ENCODE measurements at regions of chr7 and their contacts with region 1.

Region 1: DNA sequence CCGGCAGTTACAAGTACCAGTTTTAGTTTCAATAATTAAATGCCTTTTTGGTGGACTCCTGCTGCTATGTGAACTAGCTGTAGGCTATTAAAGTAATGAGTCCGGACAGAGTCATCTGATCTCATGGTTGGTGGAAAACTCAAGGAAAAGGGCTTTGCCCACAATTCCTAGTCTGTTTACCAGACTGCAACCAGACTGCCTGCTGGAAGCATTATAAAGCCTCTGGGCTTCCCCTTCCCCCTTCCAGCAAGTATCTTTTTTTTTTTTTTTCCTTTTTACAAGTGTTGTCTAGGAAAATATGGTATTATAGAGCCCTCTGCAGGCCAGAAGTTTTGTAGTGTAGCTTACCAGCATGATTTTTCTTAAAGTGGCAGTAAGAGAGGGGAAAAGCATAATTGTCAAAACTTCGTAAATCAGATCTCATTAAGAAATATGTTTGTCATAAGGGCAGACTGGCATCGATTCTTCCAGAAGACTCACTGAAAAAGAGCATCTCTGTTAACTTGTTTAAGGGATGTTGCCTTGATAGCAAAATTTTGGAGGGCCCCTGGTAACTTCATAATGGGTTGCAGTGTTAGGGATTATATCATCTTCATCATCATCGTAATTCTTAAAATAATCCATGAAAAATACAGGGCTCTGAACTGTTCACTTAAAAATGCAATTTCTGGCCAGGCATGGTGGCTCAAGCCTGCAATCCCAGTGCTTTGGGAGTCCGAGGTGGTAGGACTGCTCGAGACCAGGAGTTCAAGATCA is 181.3 kb downstream of the TAX1BP1 start:
- DNase-seq: peak; percentile 48
- ATAC-seq: peak; percentile 76
- H3K4me3 ChIP-seq: no peak overlapping the region
- H3K27ac ChIP-seq: no peak overlapping the region
- H3K4me1 ChIP-seq: peaks cover 7% of the 10 kb centered on the region
- H3K27me3 ChIP-seq: no peaks in the 10 kb centered on the region
- CTCF ChIP-seq: peak; percentile 43 to 71 (median 53); a peak in 5 of 6 replicates
- EP300 ChIP-seq: no peak
- POLR2A ChIP-seq: no peak
- RAD21 ChIP-seq: peak; percentile 84

Region 2: DNA sequence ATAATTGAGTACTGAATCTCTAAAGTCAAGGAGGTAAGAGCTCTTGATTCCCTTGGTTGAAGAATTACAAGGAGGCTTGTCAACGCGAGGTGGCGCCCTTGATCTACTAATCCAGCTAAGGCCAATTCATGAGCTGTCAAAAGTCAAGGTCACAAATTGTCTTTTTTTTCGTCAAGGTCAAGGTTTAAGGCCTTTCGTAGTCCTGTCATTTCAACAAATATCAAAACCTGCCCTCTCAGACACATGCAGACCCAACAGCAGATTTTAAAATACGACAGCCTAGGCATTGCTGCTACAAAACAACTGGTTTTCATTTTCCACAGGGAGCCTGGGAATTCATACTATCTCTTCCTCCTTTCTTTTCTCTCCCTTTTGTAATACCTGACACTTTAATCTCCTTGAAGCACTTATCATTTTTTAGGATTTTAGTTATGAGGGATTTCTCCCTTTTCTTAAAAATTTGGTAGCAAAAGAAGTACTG is 724.9 kb before region 1 on chr7:
- CTCF ChIA-PET with region 1: interaction called, 93 read pairs
- POLR2A ChIA-PET with region 1: no interaction called
- RAD21 ChIA-PET with region 1: interaction called, 70 read pairs
- SMC1A ChIA-PET with region 1: interaction called, 47 read pairs
- in situ Hi-C with region 1: loop called (anchors 5 kb)
- intact Hi-C with region 1: loop called (anchors 1 kb)
- DNase-seq: peak; percentile 16
- ATAC-seq: peak; percentile 68
- H3K4me3 ChIP-seq: no peak overlapping the region
- H3K27ac ChIP-seq: no peak overlapping the region
- H3K4me1 ChIP-seq: no peaks in the 10 kb centered on the region; the same call in 1 of the 2 replicates
- H3K27me3 ChIP-seq: peaks cover 22 to 40% of the 10 kb centered on the region in 2 experiments
- CTCF ChIP-seq: peak; percentile 70 to 89 (median 74)
- EP300 ChIP-seq: no peak
- POLR2A ChIP-seq: no peak
- RAD21 ChIP-seq: peak; percentile 94

Region 3: DNA sequence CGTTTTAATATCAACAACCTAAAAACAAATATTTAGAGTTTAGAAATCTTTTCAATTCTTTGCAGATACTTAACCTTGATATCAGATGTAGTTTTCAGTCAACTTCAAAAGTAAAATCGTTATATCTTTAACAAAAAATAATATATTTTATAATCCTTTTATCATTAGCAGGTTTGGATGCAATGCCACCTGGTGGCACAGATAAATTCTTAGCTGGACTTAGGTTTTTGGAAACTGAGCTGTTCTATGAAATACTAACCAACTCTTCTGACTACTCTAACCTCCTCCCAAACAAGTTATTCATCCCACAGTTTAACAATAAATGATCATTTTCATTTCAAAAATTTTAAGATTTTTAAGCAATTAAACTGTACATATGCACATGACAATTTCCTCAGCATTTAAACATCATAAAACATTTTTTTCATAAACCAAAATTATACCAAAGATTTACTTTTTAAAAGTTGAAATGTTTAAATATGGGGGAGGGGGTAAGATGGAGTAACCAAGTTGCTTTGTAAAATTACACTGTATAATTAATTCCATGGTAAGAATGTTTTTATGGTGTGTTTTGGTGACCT is 315.5 kb before region 1 on chr7:
- CTCF ChIA-PET with region 1: interaction called, 14 read pairs
- POLR2A ChIA-PET with region 1: no interaction called
- RAD21 ChIA-PET with region 1: no interaction called
- SMC1A ChIA-PET with region 1: interaction called, 3 read pairs
- in situ Hi-C with region 1: no loop called
- intact Hi-C with region 1: no loop called
- DNase-seq: no peak
- ATAC-seq: no peak
- H3K4me3 ChIP-seq: no peak overlapping the region
- H3K27ac ChIP-seq: no peak overlapping the region
- H3K4me1 ChIP-seq: no peaks in the 10 kb centered on the region
- H3K27me3 ChIP-seq: no peaks in the 10 kb centered on the region
- CTCF ChIP-seq: peak in 2 of 3 experiments; percentile 33 to 44; a peak in 4 of 6 replicates
- EP300 ChIP-seq: no peak
- POLR2A ChIP-seq: no peak
- RAD21 ChIP-seq: peak; percentile 30

Region 4: DNA sequence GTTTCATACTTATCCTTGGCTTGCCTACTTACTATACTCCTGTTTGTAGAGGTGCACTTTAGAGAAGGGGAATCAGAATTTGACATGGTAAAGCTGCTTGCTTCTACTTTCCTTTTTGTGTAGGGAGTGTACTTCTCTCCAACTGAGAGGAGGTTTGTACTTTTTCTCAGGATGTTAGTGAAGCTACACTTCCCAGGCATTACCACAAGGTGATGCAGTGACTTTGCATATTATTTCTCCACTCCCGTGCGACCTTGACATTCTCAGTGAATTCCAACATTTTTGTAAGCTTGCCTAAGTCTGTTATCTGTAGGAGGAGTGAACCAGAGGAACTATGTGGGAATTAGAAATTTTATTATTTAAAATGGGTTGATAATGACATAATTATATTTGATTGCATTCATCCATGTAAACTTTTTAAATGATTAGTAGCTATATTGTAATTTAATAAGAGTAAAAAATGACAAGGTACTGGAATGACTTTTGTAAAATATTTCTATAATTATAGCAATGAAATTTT is 176.1 kb before region 1 on chr7:
- CTCF ChIA-PET with region 1: interaction called, 17 read pairs
- POLR2A ChIA-PET with region 1: no interaction called
- RAD21 ChIA-PET with region 1: interaction called, 4 read pairs
- SMC1A ChIA-PET with region 1: interaction called, 26 read pairs
- in situ Hi-C with region 1: no loop called
- intact Hi-C with region 1: no loop called
- DNase-seq: no peak
- ATAC-seq: peak; percentile 21; the same call in 2 of the 3 replicates
- H3K4me3 ChIP-seq: no peak overlapping the region
- H3K27ac ChIP-seq: no peak overlapping the region
- H3K4me1 ChIP-seq: no peaks in the 10 kb centered on the region
- H3K27me3 ChIP-seq: no peaks in the 10 kb centered on the region
- CTCF ChIP-seq: peak; percentile 46 to 64 (median 55); a peak in 5 of 6 replicates
- EP300 ChIP-seq: no peak
- POLR2A ChIP-seq: no peak
- RAD21 ChIP-seq: peak; percentile 58

Region 5: GRCh38 chr7:27784393-27785053 is 136.7 kb before region 1 on chr7:
- CTCF ChIA-PET with region 1: interaction called, 18 read pairs
- POLR2A ChIA-PET with region 1: no interaction called
- RAD21 ChIA-PET with region 1: interaction called, 5 read pairs
- SMC1A ChIA-PET with region 1: interaction called, 8 read pairs
- in situ Hi-C with region 1: no loop called
- intact Hi-C with region 1: loop called (anchors 5 kb)
- DNase-seq: no peak
- ATAC-seq: peak; percentile 60
- H3K4me3 ChIP-seq: no peak overlapping the region
- H3K27ac ChIP-seq: no peak overlapping the region
- H3K4me1 ChIP-seq: no peaks in the 10 kb centered on the region
- H3K27me3 ChIP-seq: no peaks in the 10 kb centered on the region
- CTCF ChIP-seq: peak; percentile 33 to 45 (median 39); a peak in 5 of 6 replicates
- EP300 ChIP-seq: no peak
- POLR2A ChIP-seq: no peak
- RAD21 ChIP-seq: 0 out of 2 replicates have a peak, but pooled peaks have one; percentile 15

Region 6: DNA sequence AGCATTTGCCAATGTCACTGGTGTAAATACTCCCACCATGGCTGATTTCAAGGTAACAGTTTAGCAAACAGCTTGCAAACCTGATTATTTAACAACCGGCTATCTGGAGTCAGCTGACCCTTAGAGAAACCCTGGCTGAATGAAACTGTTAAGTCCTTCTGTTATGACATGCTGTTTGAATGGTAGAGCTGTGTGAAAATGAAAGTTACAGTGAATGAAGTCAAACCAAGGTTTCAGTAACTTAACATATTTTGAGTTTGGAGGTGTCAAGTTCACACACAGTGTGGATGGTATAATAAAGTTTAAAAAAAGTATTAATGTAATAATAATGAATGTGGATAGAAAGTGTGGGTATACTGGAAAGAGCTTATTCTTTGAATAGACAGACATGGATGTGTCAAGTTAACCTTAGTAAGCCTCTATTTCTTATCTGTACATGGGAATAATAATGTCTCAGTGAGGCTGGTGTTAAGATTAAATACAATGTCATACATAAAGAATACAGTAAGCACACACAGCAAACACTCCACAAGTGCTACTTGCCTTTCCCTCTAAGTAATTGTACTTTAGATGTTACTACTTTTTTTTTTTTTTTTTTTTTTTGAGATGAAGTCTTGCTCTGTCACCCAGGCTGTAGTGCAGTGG is 30.9 kb before region 1 on chr7:
- CTCF ChIA-PET with region 1: interaction called, 11 read pairs
- POLR2A ChIA-PET with region 1: no interaction called
- RAD21 ChIA-PET with region 1: interaction called, 5 read pairs
- SMC1A ChIA-PET with region 1: interaction called, 5 read pairs
- in situ Hi-C with region 1: no loop called
- intact Hi-C with region 1: no loop called
- DNase-seq: peak; percentile 67
- ATAC-seq: peak; percentile 100
- H3K4me3 ChIP-seq: no peak overlapping the region
- H3K27ac ChIP-seq: no peak overlapping the region
- H3K4me1 ChIP-seq: peaks cover 10% of the 10 kb centered on the region
- H3K27me3 ChIP-seq: no peaks in the 10 kb centered on the region
- CTCF ChIP-seq: no peak
- EP300 ChIP-seq: peak in 1 of 2 experiments; percentile 56; a peak in 1 of 4 replicates
- POLR2A ChIP-seq: no peak
- RAD21 ChIP-seq: no peak

Region 7: GRCh38 chr7:27933671-27934565 is 12.7 kb after region 1 on chr7:
- CTCF ChIA-PET with region 1: interaction called, 5 read pairs
- POLR2A ChIA-PET with region 1: no interaction called
- RAD21 ChIA-PET with region 1: interaction called, 3 read pairs
- SMC1A ChIA-PET with region 1: interaction called, 11 read pairs
- in situ Hi-C with region 1: no loop called
- intact Hi-C with region 1: no loop called
- DNase-seq: no peak
- ATAC-seq: no peak
- H3K4me3 ChIP-seq: no peak overlapping the region
- H3K27ac ChIP-seq: no peak overlapping the region
- H3K4me1 ChIP-seq: no peaks in the 10 kb centered on the region
- H3K27me3 ChIP-seq: no peaks in the 10 kb centered on the region
- CTCF ChIP-seq: peak; percentile 18 to 51 (median 28); a peak in 4 of 6 replicates
- EP300 ChIP-seq: no peak
- POLR2A ChIP-seq: no peak
- RAD21 ChIP-seq: peak; percentile 49

Region 8: GRCh38 chr7:27961255-27961654 is 40.0 kb after region 1 on chr7:
- CTCF ChIA-PET with region 1: no interaction called
- POLR2A ChIA-PET with region 1: no interaction called
- RAD21 ChIA-PET with region 1: no interaction called
- SMC1A ChIA-PET with region 1: no interaction called
- in situ Hi-C with region 1: no loop called
- intact Hi-C with region 1: no loop called
- DNase-seq: no peak
- ATAC-seq: no peak
- H3K4me3 ChIP-seq: no peak overlapping the region
- H3K27ac ChIP-seq: no peak overlapping the region
- H3K4me1 ChIP-seq: no peaks in the 10 kb centered on the region
- H3K27me3 ChIP-seq: no peaks in the 10 kb centered on the region; a peak in 3 of 4 replicates
- CTCF ChIP-seq: no peak
- EP300 ChIP-seq: no peak
- POLR2A ChIP-seq: no peak
- RAD21 ChIP-seq: no peak

Region 9: DNA sequence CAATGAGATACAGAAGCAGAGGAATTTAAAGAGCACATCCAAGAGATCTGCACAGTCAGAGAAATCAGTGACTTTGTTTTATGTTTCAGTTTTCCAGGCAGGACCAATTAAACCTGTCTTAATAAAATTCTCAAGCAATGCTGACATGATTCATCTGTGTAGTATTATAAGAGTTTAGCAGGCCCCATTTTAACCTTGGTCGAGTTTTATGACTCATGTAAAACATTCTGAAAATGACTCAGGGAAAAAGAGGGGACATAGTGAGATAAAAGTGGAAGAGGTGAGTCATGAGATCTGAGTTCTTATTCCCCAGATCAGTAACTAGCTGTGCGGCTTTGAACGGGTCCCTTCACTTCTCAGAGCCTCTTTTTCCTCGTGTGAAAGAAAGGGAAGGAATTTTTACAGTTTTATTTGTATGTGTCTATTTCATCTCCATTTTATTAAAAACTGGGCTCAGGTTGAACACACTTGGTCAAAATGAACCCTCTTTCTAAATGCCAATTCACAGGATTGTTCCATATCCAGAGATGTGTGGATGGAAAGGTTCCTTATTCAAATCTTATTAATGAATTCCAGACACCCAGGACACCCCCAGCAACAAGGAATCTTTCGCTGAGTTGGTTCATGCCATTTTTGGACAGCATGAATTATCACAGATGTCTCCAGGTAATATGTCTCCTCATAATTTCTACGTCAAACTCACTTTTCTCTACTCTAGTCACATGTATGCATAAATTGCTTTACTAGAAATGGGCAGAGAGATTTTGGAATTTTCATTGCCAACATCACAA is 116.2 kb after region 1 on chr7:
- CTCF ChIA-PET with region 1: no interaction called
- POLR2A ChIA-PET with region 1: no interaction called
- RAD21 ChIA-PET with region 1: no interaction called
- SMC1A ChIA-PET with region 1: no interaction called
- in situ Hi-C with region 1: no loop called
- intact Hi-C with region 1: no loop called
- DNase-seq: peak; percentile 55
- ATAC-seq: peak; percentile 91
- H3K4me3 ChIP-seq: no peak overlapping the region
- H3K27ac ChIP-seq: no peak overlapping the region
- H3K4me1 ChIP-seq: peaks cover 7% of the 10 kb centered on the region
- H3K27me3 ChIP-seq: peaks cover 0 to 2% of the 10 kb centered on the region in 2 experiments; a peak in 2 of 4 replicates
- CTCF ChIP-seq: no peak
- EP300 ChIP-seq: peak; percentile 71 to 72; a peak in 2 of 4 replicates
- POLR2A ChIP-seq: no peak
- RAD21 ChIP-seq: no peak

Measured in GM12878 (cell line).